Prostate gland (tissue), 2 donors: ENCODE measurements at regions of chr3 and their contacts with region 1.

Region 1: GRCh38 chr3:38346587-38347410 is at the start of gene XYLB:
- DNase-seq: peak; percentile 81
- H3K4me3 ChIP-seq: peak within 1 kb of the TSS; percentile 63 to 65
- H3K27ac ChIP-seq: peak within 1 kb of the TSS; percentile 44 to 46
- H3K4me1 ChIP-seq: no peaks in the 10 kb centered on the region
- H3K27me3 ChIP-seq: no peaks in the 10 kb centered on the region
- CTCF ChIP-seq: peak; percentile 79 to 96 (median 91)
- POLR2A ChIP-seq: peak; percentile 44
- total RNA-seq, gene XYLB: 4.9 TPM

Region 2: GRCh38 chr3:38117748-38118420 is 228.9 kb before region 1 on chr3:
- intact Hi-C with region 1: loop called (anchors 5 kb)
- DNase-seq: peak; percentile 60
- H3K4me3 ChIP-seq: no peak overlapping the region
- H3K27ac ChIP-seq: no peak overlapping the region
- H3K4me1 ChIP-seq: no peaks in the 10 kb centered on the region
- H3K27me3 ChIP-seq: no peaks in the 10 kb centered on the region
- CTCF ChIP-seq: peak in 3 of 4 experiments; percentile 64 to 89 (median 64)
- POLR2A ChIP-seq: no peak

Region 3: GRCh38 chr3:38479431-38480092 is 132.8 kb after region 1 on chr3:
- intact Hi-C with region 1: loop called (anchors 2 kb)
- DNase-seq: peak; percentile 65
- H3K4me3 ChIP-seq: no peak overlapping the region
- H3K27ac ChIP-seq: no peak overlapping the region
- H3K4me1 ChIP-seq: no peaks in the 10 kb centered on the region
- H3K27me3 ChIP-seq: no peaks in the 10 kb centered on the region
- CTCF ChIP-seq: peak; percentile 57 to 90 (median 86)
- POLR2A ChIP-seq: no peak

Region 4: DNA sequence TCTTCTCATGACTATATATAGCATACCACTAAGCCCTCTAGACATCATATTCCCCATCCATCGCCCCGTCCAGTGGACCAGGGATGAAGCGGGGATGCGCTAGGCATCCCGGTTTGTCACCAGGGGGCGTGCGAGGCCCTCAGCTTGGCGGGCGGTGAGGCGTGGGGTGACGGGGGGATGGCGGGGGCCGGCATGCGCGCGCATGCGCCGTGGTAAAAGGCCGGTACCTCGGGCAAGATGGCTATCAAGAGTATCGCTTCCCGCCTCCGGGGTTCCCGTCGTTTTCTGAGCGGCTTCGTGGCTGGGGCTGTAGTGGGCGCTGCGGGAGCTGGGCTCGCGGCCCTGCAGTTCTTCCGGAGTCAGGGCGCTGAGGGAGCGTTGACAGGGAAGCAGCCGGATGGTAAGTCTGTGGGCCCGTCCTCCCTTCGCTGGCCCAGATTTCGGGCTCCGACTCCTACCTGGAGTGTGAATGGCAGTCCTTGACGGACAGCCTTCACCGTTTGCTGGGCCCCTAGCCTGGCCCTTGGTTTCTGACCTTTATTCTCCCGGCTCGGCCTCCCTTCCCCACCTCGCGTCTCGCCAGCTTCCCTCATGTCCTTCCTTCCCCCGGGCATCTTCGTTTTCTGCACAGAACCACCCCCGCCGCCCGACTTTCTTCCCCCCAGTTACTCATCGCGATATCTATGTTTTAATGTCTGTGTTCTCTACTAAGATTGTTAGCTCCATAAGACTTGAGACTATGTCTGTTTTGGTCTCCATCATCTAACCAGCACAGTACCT is 149.5 kb after region 1 on chr3 and contains the start of gene EXOG:
- intact Hi-C with region 1: loop called (anchors 5 kb)
- DNase-seq: peak; percentile 87
- H3K4me3 ChIP-seq: peak within 1 kb of the TSS; percentile 57 to 68
- H3K27ac ChIP-seq: peak within 1 kb of the TSS; percentile 75 to 78
- H3K4me1 ChIP-seq: no peaks in the 10 kb centered on the region
- H3K27me3 ChIP-seq: no peaks in the 10 kb centered on the region
- CTCF ChIP-seq: peak; percentile 81 to 99 (median 90)
- POLR2A ChIP-seq: peak; percentile 29
- total RNA-seq, gene EXOG: 6.4 to 12.4 TPM